ENCODE measurements at regions of chr18 and their contacts with region 1.

Region 1: DNA sequence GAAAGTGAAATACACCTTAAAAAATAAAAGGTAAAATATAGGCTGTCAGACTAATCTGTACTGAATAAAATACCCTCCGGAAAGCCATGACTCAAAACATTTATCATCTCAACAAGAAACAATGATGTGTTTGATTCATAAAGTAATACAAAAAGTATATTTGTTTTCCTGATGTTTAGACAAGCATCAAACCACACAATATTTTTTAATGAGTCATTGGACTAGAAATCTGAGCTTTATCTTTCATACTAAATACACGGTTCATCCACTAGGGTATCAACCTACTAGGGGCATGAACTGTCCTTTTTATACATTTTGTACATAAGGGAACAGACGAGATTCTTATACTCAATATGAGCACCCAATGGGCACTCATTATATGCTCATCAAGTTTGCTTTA is 31.3 kb downstream of the CD226 start:
- DNase-seq: no peak

Region 2: DNA sequence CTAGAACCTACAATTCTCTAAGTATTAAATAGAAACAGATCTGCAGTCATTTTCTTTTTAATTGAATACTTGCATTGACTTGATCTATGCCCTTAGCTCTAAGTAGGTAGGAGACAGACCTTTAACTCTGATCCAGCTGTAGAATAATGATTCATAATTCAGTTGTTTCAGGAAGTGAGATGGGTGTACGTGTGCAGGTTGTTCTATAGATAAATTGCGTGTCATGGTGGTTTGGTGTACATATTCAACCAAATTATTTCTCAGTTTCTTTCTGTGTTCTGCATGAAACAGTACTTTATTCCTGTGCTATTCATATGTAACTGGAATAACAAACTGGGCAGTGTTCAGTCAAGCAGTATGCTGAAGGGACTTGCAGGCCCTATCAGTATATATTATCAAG is 65.5 kb after region 1 on chr18:
- intact Hi-C with region 1: loop called in 1 of 2 experiments (anchors 10 kb)
- DNase-seq: no peak

Measured in posterior vena cava (tissue), 2 donors.